ENCODE measurements at regions of chr18 and their contacts with region 1.

Region 1: DNA sequence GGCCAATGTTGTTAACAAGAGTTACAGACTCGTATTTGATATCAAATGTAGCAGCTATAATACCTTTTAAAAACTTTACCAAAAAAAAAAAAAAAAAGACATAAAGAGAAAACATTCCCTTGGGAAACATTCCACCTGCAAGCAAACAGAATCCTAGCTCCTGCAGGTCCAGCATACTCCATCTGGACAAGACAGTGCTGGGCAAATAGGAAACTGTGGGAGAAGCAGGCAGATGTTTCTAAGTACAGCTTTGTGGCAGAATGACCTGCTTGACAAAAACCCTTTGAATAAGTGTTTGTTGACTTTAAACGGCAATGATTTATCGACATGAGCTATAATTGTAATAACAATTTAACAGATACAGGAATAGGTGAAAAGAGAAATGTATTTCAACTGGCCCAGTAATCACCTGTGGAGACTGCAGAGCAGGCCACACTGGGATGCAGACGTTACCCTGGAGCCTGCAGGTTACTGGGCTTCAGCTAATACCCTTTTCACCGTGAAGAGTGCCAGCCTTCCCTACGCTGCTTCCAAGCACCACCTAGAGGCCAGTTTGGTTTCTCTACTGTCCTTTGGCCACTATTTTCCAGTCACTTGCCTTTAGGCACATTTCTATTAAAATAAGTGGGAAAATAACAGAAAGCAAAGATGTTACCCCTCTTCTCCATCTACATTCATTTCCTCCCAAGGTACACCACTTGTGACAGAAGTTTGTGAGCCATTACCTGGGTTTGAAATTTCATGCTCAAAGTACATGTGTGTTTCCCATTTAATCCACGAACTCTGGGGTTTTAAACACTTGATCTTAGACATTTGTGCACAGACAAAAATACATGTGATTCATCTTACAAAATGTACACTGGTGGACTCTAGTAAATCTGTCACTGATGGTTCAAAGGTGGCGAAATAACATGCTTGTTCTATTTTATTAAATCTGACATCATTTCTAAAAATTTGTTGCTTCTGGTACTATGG is 96.9 kb upstream of the ZNF397 start:
- DNase-seq: peak; percentile 30
- ATAC-seq: peak; percentile 94
- H3K4me3 ChIP-seq: no peak overlapping the region
- H3K27ac ChIP-seq: no peak overlapping the region
- H3K4me1 ChIP-seq: no peaks in the 10 kb centered on the region
- H3K27me3 ChIP-seq: no peaks in the 10 kb centered on the region
- CTCF ChIP-seq: peak; percentile 80

Region 2: GRCh38 chr18:33446604-33447003 is 1697.3 kb before region 1 on chr18:
- CTCF ChIA-PET with region 1: no interaction called
- POLR2A ChIA-PET with region 1: no interaction called
- in situ Hi-C with region 1: no loop called
- intact Hi-C with region 1: no loop called
- DNase-seq: no peak
- ATAC-seq: no peak
- H3K4me3 ChIP-seq: no peak overlapping the region
- H3K27ac ChIP-seq: no peak overlapping the region
- H3K4me1 ChIP-seq: no peaks in the 10 kb centered on the region
- H3K27me3 ChIP-seq: no peaks in the 10 kb centered on the region
- CTCF ChIP-seq: no peak

Region 3: GRCh38 chr18:34809451-34810072 is 334.3 kb before region 1 on chr18:
- CTCF ChIA-PET with region 1: interaction called, 10 read pairs
- POLR2A ChIA-PET with region 1: no interaction called
- in situ Hi-C with region 1: no loop called
- intact Hi-C with region 1: no loop called
- DNase-seq: peak; percentile 4
- ATAC-seq: no peak
- H3K4me3 ChIP-seq: no peak overlapping the region
- H3K27ac ChIP-seq: no peak overlapping the region
- H3K4me1 ChIP-seq: no peaks in the 10 kb centered on the region
- H3K27me3 ChIP-seq: no peaks in the 10 kb centered on the region
- CTCF ChIP-seq: peak; percentile 33; the same call in 1 of the 2 replicates

Region 4: GRCh38 chr18:34867520-34867919 is 276.4 kb before region 1 on chr18:
- CTCF ChIA-PET with region 1: no interaction called
- POLR2A ChIA-PET with region 1: no interaction called
- in situ Hi-C with region 1: no loop called
- intact Hi-C with region 1: loop called (anchors 5 kb)
- DNase-seq: no peak
- ATAC-seq: no peak
- H3K4me3 ChIP-seq: no peak overlapping the region
- H3K27ac ChIP-seq: no peak overlapping the region
- H3K4me1 ChIP-seq: no peaks in the 10 kb centered on the region
- H3K27me3 ChIP-seq: no peaks in the 10 kb centered on the region
- CTCF ChIP-seq: no peak; the same call in 1 of the 2 replicates

Region 5: DNA sequence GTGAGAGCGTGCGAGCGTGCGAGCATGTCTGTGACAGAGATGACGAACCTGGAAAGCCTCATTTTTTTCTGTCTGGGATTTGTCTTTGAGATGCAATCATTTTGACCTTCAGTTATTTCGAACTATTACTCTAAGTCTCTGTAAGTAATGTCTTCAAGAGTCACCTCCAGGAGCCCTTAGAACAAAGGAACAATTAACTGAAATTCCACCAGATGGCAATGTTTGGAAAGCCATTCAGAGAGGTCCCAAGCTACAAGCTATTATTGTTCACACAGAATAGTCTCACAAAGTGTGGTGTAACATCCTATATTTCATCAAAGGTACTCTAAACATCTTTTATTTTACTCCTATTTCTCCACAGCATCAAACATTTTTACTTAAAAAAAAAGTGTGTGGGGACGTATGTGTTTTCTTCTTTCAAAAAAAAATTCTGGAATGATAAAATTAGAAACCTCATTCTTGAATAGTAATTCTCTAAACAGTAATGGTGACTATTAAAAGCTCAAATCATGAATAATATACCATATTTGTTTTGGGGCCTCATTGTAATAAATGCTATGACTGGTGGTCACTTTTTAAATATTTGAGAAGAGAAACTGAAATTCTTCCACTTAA is 137.8 kb before region 1 on chr18:
- CTCF ChIA-PET with region 1: interaction called, 12 read pairs
- POLR2A ChIA-PET with region 1: no interaction called
- in situ Hi-C with region 1: no loop called
- intact Hi-C with region 1: loop called (anchors 2 kb)
- DNase-seq: peak; percentile 46
- ATAC-seq: peak; percentile 95
- H3K4me3 ChIP-seq: no peak overlapping the region
- H3K27ac ChIP-seq: no peak overlapping the region
- H3K4me1 ChIP-seq: no peaks in the 10 kb centered on the region
- H3K27me3 ChIP-seq: no peaks in the 10 kb centered on the region
- CTCF ChIP-seq: peak; percentile 62